Panc1 (cell line): ENCODE measurements at regions of chr14 and their contacts with region 1.

Region 1: DNA sequence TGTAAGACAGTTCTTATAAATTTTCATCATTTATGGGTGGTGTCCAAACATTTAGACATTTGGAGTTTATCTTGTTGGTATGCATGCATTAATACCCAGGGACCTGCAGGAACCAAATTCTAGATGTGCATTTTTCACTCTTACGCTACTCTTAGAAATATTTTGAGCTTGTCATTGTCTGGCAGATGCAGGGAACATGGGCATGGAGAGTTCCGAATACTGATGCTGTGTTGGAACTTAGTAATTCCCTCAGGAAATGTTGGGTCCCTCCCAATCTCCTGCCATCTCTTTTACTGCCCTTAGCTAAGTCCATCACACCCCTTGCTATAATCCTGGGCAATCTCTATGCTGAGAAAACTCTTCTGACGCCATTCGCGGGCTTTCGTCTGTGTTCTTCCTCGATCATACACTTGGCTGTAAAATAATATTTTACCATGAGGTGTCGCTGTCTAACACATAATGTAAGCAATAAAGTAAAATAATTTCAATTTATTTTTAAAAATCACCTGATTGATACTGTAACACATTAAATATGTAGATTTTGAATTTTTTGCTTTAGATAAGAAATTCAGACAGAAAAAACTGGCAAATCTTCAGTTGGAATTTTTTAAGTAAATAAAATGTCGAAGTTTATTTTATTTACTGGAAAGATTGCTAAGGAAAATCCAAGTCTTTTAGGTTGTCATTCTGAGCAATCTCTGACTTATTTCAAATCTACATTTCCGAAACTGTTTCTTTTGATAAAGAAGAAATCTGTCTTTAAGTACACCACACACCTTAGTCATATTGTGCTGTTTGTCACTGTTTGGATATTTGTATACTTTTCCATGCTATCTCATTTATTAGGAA is 304.1 kb upstream of the SSTR1 start:
- DNase-seq: peak; percentile 8
- ATAC-seq: no peak
- H3K4me3 ChIP-seq: no peak overlapping the region
- H3K27ac ChIP-seq: no peak overlapping the region
- H3K4me1 ChIP-seq: no peaks in the 10 kb centered on the region
- H3K27me3 ChIP-seq: no peaks in the 10 kb centered on the region
- CTCF ChIP-seq: peak; percentile 70

Region 2: GRCh38 chr14:38208618-38209562 is 305.3 kb after region 1 on chr14:
- CTCF ChIA-PET with region 1: no interaction called
- POLR2A ChIA-PET with region 1: no interaction called
- in situ Hi-C with region 1: no loop called
- intact Hi-C with region 1: loop called (anchors 10 kb)
- DNase-seq: no peak
- ATAC-seq: peak; percentile 58
- H3K4me3 ChIP-seq: no peak overlapping the region
- H3K27ac ChIP-seq: no peak overlapping the region
- H3K4me1 ChIP-seq: no peaks in the 10 kb centered on the region
- H3K27me3 ChIP-seq: peaks cover 17% of the 10 kb centered on the region
- CTCF ChIP-seq: no peak

Region 3: DNA sequence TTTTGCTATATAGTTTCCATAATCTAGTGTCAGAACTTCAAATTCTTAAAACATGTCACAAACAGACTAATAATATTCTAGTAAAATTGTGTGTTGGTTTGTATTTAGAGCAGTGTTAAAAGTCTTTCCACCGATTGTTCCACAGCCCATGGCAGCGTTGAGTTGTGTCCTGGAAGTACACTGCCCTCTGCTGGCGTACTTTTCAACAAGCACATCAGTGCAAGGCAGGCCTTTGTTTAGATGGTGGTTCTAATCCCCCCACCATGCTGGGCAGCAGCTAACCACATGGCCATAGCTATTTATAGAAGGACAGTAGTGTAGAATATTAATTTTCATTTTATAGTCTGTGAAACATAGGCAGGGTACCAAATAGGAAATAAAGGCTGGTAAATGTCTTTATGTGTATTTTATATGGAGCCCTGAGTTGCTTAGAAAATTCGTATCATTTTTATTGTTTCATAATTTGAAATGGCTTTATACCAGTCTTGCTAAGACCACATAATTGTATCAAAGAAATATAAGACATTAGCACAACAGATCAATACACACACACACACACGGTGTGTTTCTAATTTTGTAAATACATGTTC is 964.1 kb after region 1 on chr14:
- CTCF ChIA-PET with region 1: no interaction called
- POLR2A ChIA-PET with region 1: no interaction called
- in situ Hi-C with region 1: no loop called
- intact Hi-C with region 1: loop called (anchors 1 kb)
- DNase-seq: peak; percentile 17
- ATAC-seq: peak; percentile 88
- H3K4me3 ChIP-seq: no peak overlapping the region
- H3K27ac ChIP-seq: no peak overlapping the region
- H3K4me1 ChIP-seq: no peaks in the 10 kb centered on the region
- H3K27me3 ChIP-seq: no peaks in the 10 kb centered on the region
- CTCF ChIP-seq: peak; percentile 81

Region 4: DNA sequence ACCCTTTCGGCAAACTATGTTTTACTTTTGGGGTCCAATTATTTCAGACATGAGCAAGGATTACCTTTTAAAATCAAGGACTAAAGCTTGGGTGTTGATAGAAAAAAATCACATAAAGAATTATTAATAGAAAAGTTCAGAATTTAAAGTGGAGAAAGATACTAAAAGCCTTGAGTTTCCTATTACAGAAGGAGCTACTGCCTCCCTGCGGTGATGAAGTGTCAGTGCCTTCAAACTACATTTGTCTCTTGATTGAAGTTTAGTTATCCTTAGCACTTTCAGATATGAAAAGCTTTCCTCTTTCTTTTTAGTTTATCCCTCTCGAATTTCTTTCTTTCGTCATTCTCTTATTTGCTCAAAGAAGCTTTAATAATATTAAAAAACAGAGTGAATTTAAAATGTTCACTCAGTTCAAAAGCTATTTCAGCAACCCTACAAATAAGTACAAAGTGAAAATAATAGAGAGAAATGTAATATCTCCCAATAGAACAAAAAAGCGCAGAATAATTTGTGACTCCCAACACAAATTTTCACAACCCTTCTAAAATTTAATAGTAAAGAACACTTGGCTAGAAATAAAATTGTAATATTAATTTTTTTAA is 1111.9 kb after region 1 on chr14:
- CTCF ChIA-PET with region 1: interaction called, 3 read pairs
- POLR2A ChIA-PET with region 1: no interaction called
- in situ Hi-C with region 1: no loop called
- intact Hi-C with region 1: loop called (anchors 10 kb)
- DNase-seq: peak; percentile 8
- ATAC-seq: no peak
- H3K4me3 ChIP-seq: no peak overlapping the region
- H3K27ac ChIP-seq: no peak overlapping the region
- H3K4me1 ChIP-seq: no peaks in the 10 kb centered on the region
- H3K27me3 ChIP-seq: no peaks in the 10 kb centered on the region
- CTCF ChIP-seq: peak; percentile 74; the same call in 1 of the 2 replicates